HCT116 (cell line): ENCODE measurements at regions of chr11 and their contacts with region 1.

Region 1: DNA sequence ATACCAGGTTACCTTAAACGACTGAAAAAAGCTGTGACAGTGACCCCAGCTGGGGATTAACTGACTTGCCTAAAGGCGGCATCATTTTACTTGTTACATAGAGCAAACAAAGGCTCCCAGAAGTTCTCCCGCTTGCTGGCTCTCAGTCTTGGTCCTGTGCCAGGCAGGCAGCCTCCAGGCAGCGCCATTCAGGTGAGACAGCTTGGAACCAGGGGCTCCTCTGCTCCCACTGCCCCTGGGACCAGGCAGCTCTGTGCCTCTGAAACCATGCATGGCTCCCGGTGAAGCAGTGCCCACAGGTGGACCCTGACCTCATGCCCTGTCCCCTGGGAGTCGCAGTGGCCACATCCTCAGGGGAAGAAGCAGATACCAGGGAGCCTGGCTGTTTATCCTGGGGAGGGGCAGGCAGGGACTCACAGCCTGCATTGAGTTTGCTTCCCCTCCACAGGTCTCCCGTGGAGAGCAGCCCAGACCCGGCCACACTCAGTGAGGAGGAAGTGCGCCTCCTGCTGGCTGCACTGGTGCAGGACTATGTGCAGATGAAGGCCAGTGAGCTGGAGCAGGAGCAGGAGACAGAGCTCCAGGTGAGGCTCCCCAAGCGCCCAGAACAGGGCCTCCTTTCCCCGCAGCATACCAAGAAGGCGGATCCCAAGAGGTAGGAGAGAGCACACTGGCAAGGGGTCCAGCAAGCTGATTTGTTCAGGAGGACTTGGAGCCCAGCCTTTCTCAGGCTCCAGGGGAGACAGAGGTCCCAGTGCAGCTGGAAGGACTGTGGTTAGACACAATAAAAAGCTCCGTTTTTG is 15.6 kb upstream of the CYP2R1 start:
- DNase-seq: no peak
- ATAC-seq: peak; percentile 93
- H3K4me3 ChIP-seq: 0 out of 4 replicates have a peak overlapping the region, but pooled peaks of 1 of the 2 experiments have one; percentile 14
- H3K27ac ChIP-seq: no peak overlapping the region
- H3K4me1 ChIP-seq: peaks cover 3 to 12% of the 10 kb centered on the region in 2 experiments; a peak in 2 of 4 replicates
- H3K27me3 ChIP-seq: no peaks in the 10 kb centered on the region
- CTCF ChIP-seq: peak; percentile 70 to 92 (median 84); a peak in 5 of 6 replicates
- POLR2A ChIP-seq: peak; percentile 25
- RAD21 ChIP-seq: peak; percentile 81

Region 2: DNA sequence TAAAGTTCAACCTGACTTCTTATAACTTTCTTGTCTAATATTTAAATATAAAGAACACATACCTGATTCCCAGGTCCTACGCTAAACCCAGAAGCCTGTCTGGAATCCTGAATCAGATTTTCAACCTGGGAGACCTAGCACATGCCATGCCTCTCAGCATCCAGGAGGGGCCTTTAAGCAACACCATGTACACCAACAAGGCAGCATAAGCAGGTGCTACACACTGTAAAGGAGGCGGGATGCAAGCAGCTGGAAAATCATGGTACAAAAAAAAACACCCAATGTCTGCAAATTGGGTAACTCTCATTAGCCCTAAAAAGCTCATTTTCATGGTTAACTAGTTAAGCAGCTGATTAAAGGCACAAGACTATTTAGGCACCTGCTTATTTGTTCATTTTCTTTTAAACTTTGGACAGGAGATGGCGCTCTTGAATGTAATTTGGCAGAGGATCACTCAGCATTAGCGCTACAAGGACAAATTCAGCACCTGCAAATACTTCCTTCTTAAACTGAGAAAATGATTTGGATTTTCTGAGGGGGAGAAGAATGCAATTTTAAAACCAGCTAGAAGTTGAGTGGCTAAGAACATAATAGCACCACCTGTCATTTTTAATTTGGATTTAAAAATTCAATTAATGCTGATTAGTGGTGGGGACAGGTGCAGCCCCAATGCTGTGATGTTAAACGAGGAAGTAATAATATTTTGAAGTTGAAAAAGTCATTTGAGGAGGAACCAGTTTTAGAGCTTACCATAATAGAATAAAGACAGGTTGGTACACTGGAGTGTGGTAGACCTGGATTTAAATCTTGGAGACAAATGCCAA is 1135.2 kb before region 1 on chr11:
- CTCF ChIA-PET with region 1: interaction called, 4 read pairs
- POLR2A ChIA-PET with region 1: no interaction called
- RAD21 ChIA-PET with region 1: interaction called in 1 of 2 experiments, 5 read pairs
- intact Hi-C with region 1: loop called (anchors 10 kb)
- DNase-seq: peak; percentile 67
- ATAC-seq: peak; percentile 86
- H3K4me3 ChIP-seq: no peak overlapping the region
- H3K27ac ChIP-seq: no peak overlapping the region
- H3K4me1 ChIP-seq: no peaks in the 10 kb centered on the region
- H3K27me3 ChIP-seq: no peaks in the 10 kb centered on the region
- CTCF ChIP-seq: peak; percentile 27 to 85 (median 75); a peak in 5 of 6 replicates
- POLR2A ChIP-seq: no peak
- RAD21 ChIP-seq: peak; percentile 94

Region 3: DNA sequence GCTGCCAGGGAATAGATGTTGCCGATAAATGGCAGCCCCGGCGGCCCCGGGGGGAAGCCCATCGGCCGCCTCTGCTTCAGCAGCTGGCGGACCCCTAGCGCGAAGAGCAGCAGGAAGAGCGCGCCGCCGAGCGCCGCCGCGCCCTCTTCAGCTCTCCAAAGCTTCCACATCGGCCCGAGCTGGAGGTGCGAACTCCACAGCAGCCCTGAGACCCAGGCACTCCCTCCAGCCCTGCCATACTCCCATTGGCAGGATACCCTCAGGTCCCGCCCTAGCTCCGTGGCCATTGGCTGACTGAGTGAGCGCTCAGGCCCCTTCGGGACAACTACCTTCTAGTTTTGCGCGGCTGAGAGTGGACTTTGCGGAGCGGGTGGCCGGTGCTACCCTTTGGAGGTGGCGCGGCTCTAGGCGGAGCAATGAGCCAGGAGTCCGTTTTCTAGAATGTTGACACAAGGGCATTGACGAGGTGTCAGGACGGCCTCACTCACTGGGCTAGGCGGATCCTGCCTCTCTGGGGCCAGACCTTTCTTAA is 15.5 kb before region 1 on chr11 and contains the start of gene CYP2R1:
- CTCF ChIA-PET with region 1: interaction called, 75 read pairs
- POLR2A ChIA-PET with region 1: interaction called, 17 read pairs
- RAD21 ChIA-PET with region 1: interaction called, 3 to 4 read pairs
- intact Hi-C with region 1: no loop called
- DNase-seq: peak; percentile 97
- ATAC-seq: peak; percentile 95
- H3K4me3 ChIP-seq: peak within 1 kb of the TSS; percentile 57 to 62
- H3K27ac ChIP-seq: peak within 1 kb of the TSS; percentile 87
- H3K4me1 ChIP-seq: peaks cover 5 to 24% of the 10 kb centered on the region in 2 experiments; a peak in 3 of 4 replicates
- H3K27me3 ChIP-seq: no peaks in the 10 kb centered on the region
- CTCF ChIP-seq: no peak
- POLR2A ChIP-seq: no peak
- RAD21 ChIP-seq: no peak
- total RNA-seq, gene CYP2R1: 18.3 TPM

Region 4: DNA sequence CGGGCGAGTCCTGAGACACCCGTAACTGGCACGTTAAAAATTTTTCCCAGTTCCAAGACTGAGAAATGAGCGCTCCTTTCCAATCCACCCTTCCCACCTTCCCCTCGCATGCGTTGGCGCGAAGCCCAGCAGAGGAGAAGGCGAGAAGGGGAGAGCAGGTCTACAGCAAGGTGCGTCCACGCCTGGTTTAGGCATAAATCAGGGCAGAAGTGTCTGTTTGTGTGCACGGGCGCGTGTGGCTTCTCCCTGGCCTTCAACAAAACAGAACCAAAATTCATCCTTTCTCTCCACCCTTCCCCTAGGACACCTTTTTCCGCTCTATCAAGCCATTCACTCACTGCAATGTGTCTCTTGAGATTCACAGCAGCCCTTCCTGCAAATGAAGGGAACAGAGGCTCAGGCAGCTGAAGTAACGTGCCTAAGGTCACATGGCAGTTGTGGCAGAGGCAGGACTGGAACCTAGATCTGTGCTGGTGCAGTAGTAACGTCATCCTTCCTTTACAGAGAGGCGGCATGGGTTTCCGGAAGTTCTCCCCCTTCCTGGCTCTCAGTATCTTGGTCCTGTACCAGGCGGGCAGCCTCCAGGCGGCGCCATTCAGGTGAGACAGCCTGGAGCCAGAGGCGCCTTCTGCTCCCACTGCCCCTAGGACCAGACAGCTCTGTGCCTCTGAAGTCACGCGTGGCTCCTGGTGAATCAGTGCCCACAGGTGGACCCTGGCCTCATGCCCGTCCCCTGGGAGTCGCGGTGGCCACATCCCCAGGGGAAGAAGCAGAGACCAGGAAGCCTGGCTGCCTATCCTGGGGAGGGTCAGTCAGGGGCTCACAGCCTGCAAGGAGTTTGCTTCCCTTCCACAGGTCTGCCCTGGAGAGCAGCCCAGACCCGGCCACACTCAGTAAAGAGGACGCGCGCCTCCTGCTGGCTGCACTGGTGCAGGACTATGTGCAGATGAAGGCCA is 166.9 kb after region 1 on chr11:
- CTCF ChIA-PET with region 1: interaction called, 122 read pairs
- POLR2A ChIA-PET with region 1: no interaction called
- RAD21 ChIA-PET with region 1: interaction called, 8 to 18 read pairs
- intact Hi-C with region 1: loop called (anchors 1 kb)
- DNase-seq: peak; percentile 83
- ATAC-seq: peak; percentile 95
- H3K4me3 ChIP-seq: peak overlapping the region; percentile 7 to 21; a peak in 2 of 4 replicates
- H3K27ac ChIP-seq: peak overlapping the region; percentile 56
- H3K4me1 ChIP-seq: peaks cover 7 to 11% of the 10 kb centered on the region in 2 experiments; a peak in 2 of 4 replicates
- H3K27me3 ChIP-seq: no peaks in the 10 kb centered on the region
- CTCF ChIP-seq: peak; percentile 82 to 95 (median 85)
- POLR2A ChIP-seq: no peak
- RAD21 ChIP-seq: peak; percentile 92

Region 5: DNA sequence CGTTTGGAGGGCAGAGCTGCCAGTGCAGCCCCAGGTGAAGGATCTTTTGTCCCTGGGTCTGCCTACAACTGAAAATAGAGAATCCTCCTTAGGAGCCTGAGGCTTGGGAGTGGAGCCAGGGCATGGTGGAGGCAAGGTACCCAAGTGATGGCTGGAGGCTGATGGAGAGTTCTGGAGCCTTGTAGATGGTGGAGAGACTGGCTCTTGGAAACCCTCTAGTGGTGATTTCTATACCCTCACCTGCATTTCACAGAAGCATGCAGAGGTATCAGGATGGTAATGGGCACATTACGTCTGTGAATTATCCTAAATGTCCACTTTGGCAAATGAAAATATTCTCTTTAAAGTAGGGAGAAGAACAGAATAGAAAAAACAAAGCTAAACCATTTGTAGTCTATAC is 251.5 kb after region 1 on chr11:
- CTCF ChIA-PET with region 1: interaction called, 14 read pairs
- POLR2A ChIA-PET with region 1: no interaction called
- RAD21 ChIA-PET with region 1: no interaction called
- intact Hi-C with region 1: loop called (anchors 2 kb)
- DNase-seq: peak; percentile 28
- ATAC-seq: peak; percentile 95
- H3K4me3 ChIP-seq: no peak overlapping the region
- H3K27ac ChIP-seq: no peak overlapping the region
- H3K4me1 ChIP-seq: peaks cover 0 to 15% of the 10 kb centered on the region in 2 experiments; a peak in 1 of 4 replicates
- H3K27me3 ChIP-seq: no peaks in the 10 kb centered on the region
- CTCF ChIP-seq: peak; percentile 73 to 86 (median 78)
- POLR2A ChIP-seq: no peak
- RAD21 ChIP-seq: peak; percentile 84

Region 6: DNA sequence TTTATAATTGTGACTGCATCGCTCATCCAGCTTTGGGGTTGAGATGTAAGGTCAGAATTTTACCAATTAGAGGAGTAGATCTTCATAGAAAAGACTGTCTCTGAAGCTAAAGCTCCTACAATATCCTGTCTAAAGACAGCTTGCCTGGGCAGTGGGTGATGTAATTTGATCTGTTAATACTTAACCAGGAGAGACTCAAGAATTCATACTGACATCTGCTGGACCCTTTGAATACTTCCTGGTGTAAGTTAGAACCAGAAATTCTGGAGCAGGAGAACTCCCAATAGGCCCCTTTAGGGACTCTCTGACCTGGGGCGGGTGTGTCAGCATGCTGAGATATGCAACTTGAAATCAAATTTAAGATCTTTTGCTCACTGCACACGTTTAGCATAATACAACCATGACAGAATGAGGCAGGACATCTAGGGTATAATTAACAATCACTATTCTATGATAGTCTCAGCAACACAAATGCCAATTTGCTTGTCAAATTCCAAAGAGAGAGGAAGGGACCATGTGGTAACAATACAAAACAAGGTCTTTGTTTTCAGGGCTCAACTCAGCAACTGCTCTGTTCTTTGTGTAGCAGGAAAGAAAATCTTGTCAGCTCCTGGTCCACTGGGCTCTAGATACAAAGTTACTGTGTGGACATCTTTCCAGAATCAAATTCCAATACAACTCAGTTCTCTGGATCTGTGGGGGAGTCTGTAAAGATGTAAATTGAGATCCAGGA is 351.0 kb after region 1 on chr11:
- CTCF ChIA-PET with region 1: interaction called, 13 read pairs
- POLR2A ChIA-PET with region 1: no interaction called
- RAD21 ChIA-PET with region 1: no interaction called
- intact Hi-C with region 1: loop called (anchors 1 kb)
- DNase-seq: peak; percentile 51
- ATAC-seq: peak; percentile 97
- H3K4me3 ChIP-seq: no peak overlapping the region
- H3K27ac ChIP-seq: no peak overlapping the region
- H3K4me1 ChIP-seq: peaks cover 3 to 8% of the 10 kb centered on the region in 2 experiments; a peak in 3 of 4 replicates
- H3K27me3 ChIP-seq: no peaks in the 10 kb centered on the region
- CTCF ChIP-seq: peak; percentile 36 to 43 (median 42); a peak in 5 of 6 replicates
- POLR2A ChIP-seq: no peak
- RAD21 ChIP-seq: peak; percentile 51